ENCODE measurements at regions of chr13 and their contacts with region 1.

Region 1: GRCh38 chr13:35210261-35210660 is 266.2 kb downstream of the MAB21L1 start:
- DNase-seq: no peak
- ATAC-seq: no peak
- H3K4me3 ChIP-seq: no peak overlapping the region
- H3K27ac ChIP-seq: no peak overlapping the region
- H3K4me1 ChIP-seq: no peaks in the 10 kb centered on the region
- H3K27me3 ChIP-seq: no peaks in the 10 kb centered on the region
- CTCF ChIP-seq: 0 out of 2 replicates have a peak, but pooled peaks have one; percentile 10
- EP300 ChIP-seq: no peak
- POLR2A ChIP-seq: no peak
- RAD21 ChIP-seq: no peak

Region 2: GRCh38 chr13:35630551-35631275 is 420.5 kb after region 1 on chr13:
- CTCF ChIA-PET with region 1: no interaction called
- POLR2A ChIA-PET with region 1: no interaction called
- in situ Hi-C with region 1: no loop called
- intact Hi-C with region 1: loop called (anchors 2 kb)
- DNase-seq: peak; percentile 52
- ATAC-seq: peak; percentile 100
- H3K4me3 ChIP-seq: no peak overlapping the region
- H3K27ac ChIP-seq: no peak overlapping the region
- H3K4me1 ChIP-seq: peaks cover 4% of the 10 kb centered on the region; the same call in 1 of the 2 replicates
- H3K27me3 ChIP-seq: no peaks in the 10 kb centered on the region
- CTCF ChIP-seq: peak; percentile 67
- EP300 ChIP-seq: no peak
- POLR2A ChIP-seq: no peak
- RAD21 ChIP-seq: no peak